ENCODE measurements at regions of chr15 and their contacts with region 1.

Region 1: GRCh38 chr15:85794603-85795336 is at the start of gene KLHL25:
- DNase-seq: peak; percentile 96
- H3K4me3 ChIP-seq: peak within 1 kb of the TSS; percentile 90
- H3K27ac ChIP-seq: peak within 1 kb of the TSS; percentile 39
- H3K4me1 ChIP-seq: peaks cover 21% of the 10 kb centered on the region
- CTCF ChIP-seq: no peak
- total RNA-seq, gene KLHL25: 4.5 and 7.7 TPM in 2 replicates

Region 2: GRCh38 chr15:85380217-85380811 is 414.5 kb before region 1 on chr15 and contains the start of gene AKAP13:
- CTCF ChIA-PET with region 1: no interaction called
- POLR2A ChIA-PET with region 1: no interaction called
- intact Hi-C with region 1: no loop called
- DNase-seq: peak; percentile 100
- H3K4me3 ChIP-seq: peak within 1 kb of the TSS; percentile 86
- H3K27ac ChIP-seq: peak within 1 kb of the TSS; percentile 88
- H3K4me1 ChIP-seq: peaks cover 32% of the 10 kb centered on the region
- CTCF ChIP-seq: no peak
- total RNA-seq, gene AKAP13: 124 and 140 TPM in 2 replicates

Region 3: GRCh38 chr15:85742186-85742821 is 52.5 kb before region 1 on chr15:
- CTCF ChIA-PET with region 1: no interaction called
- POLR2A ChIA-PET with region 1: interaction called, 3 read pairs
- intact Hi-C with region 1: loop called (anchors 5 kb)
- DNase-seq: no peak
- H3K4me3 ChIP-seq: no peak overlapping the region
- H3K27ac ChIP-seq: no peak overlapping the region
- H3K4me1 ChIP-seq: no peaks in the 10 kb centered on the region
- CTCF ChIP-seq: no peak

Region 4: GRCh38 chr15:86101818-86102217 is 307.0 kb after region 1 on chr15:
- CTCF ChIA-PET with region 1: no interaction called
- POLR2A ChIA-PET with region 1: no interaction called
- intact Hi-C with region 1: no loop called
- DNase-seq: no peak
- H3K4me3 ChIP-seq: no peak overlapping the region
- H3K27ac ChIP-seq: no peak overlapping the region
- H3K4me1 ChIP-seq: no peaks in the 10 kb centered on the region
- CTCF ChIP-seq: no peak